CD8-positive, alpha-beta T cell (primary cell): ENCODE measurements at regions of chr4 and their contacts with region 1.

Region 1: DNA sequence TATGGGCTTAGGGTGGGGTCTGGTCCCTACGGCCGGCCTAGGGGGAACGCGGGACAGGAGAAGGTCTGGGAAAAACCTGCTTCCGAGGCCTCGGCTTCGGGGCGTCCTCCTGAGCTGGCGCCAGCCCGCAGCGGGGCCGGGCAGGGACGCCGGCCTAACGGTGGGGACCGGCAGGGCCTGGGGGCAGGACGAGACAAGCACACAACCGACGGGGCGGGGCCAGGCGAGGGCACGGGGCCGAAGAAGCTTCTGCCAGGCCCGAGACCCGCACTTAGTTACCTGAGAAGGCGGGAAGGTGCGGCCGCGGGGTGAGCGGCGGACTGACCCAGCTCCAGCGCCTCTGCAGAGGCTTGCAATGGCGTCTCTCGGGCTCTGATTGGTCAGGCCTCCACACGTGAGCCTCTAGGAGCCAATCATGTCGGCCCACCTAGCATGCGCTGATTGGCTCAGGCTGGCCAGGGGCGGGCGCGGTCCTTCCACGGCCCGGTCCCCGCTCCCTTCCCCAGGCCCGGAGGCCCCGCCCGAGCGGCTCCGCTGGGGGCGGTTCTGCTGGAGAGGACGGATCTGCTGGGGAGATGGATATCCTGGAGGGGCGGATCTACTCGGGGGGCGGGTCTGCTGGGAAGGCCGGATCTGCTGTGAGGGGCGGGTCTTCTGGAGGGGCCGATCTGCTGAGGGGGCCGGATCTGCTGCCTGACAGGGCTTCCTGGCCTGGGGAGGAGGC is 44.3 kb downstream of the CPLX1 start:
- DNase-seq: peak; percentile 97 to 99 (median 98)
- ATAC-seq: peak; percentile 92
- H3K4me3 ChIP-seq: peak overlapping the region; percentile 76 to 97
- H3K4me3 Mint-ChIP-seq: peak overlapping the region; percentile 92
- H3K27ac ChIP-seq: peak overlapping the region; percentile 94 to 95
- H3K27ac Mint-ChIP-seq: peak overlapping the region; percentile 95
- H3K4me1 ChIP-seq: peaks cover 46% of the 10 kb centered on the region
- H3K4me1 Mint-ChIP-seq: peaks cover 52% of the 10 kb centered on the region
- H3K27me3 ChIP-seq: peaks cover 0 to 17% of the 10 kb centered on the region in 2 experiments
- H3K27me3 Mint-ChIP-seq: peaks cover 21% of the 10 kb centered on the region
- CTCF ChIP-seq: no peak

Region 2: DNA sequence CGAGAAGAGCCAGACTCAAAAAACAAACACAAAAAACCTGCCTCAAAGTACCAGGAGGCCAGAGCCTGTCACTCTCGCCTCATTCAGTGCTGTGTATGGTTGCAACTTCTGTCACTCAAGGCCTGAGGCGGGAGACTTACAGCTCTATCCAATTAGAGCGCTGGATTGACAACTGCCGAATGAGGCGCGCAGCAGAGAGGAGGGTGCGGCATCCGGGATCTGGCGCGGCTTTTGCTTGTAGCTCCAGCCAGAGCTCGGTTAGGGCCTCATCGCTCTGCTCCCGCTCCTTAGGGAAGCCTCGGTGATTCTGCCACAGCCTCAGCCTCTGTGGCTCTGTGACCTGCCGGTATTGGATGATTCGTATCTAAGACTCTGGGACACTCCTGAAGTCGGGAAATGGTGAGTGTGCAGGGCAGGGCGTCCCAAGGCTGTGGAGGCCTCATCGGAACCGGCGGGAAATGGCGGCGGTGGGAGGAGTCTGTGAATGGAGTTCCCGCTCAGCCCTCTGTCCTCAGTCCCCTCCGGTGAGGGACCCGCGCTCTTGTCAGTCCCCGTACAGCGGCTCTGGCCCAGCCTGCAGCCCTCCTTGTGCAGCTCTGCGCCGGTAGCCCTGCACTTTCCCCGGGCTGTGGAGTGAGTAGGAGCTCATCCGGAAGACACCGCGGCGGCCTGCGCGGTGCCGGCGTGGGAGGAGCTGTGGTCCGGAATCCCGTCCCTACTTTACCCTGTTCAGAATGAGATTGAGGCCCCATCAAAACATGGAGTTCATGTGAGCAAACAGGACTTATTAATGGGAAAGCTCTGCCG is 657.2 kb before region 1 on chr4 and contains the start of gene ZNF718:
- CTCF ChIA-PET with region 1: no interaction called
- POLR2A ChIA-PET with region 1: no interaction called
- intact Hi-C with region 1: loop called in 1 of 2 experiments (anchors 5 kb)
- DNase-seq: peak; percentile 78 to 97 (median 91)
- ATAC-seq: peak; percentile 95
- H3K4me3 ChIP-seq: peak within 1 kb of the TSS; percentile 78 to 96
- H3K4me3 Mint-ChIP-seq: peak within 1 kb of the TSS; percentile 99
- H3K27ac ChIP-seq: peak within 1 kb of the TSS; percentile 75 to 83
- H3K27ac Mint-ChIP-seq: peak within 1 kb of the TSS; percentile 99
- H3K4me1 ChIP-seq: peaks cover 29% of the 10 kb centered on the region
- H3K4me1 Mint-ChIP-seq: peaks cover 44% of the 10 kb centered on the region
- H3K27me3 ChIP-seq: no peaks in the 10 kb centered on the region
- H3K27me3 Mint-ChIP-seq: no peaks in the 10 kb centered on the region
- CTCF ChIP-seq: no peak
- total RNA-seq, gene ZNF718: 3.6 to 4.0 TPM

Region 3: GRCh38 chr4:680928-681645 is 100.6 kb before region 1 on chr4:
- CTCF ChIA-PET with region 1: no interaction called
- POLR2A ChIA-PET with region 1: no interaction called
- intact Hi-C with region 1: loop called in 1 of 2 experiments (anchors 1 kb)
- DNase-seq: peak in 7 of 9 experiments; percentile 41 to 76 (median 55)
- ATAC-seq: peak; percentile 48
- H3K4me3 ChIP-seq: peak overlapping the region; percentile 54 to 56
- H3K4me3 Mint-ChIP-seq: peak overlapping the region; percentile 63
- H3K27ac ChIP-seq: peak overlapping the region in 1 of 2 experiments; percentile 69
- H3K27ac Mint-ChIP-seq: peak overlapping the region; percentile 27
- H3K4me1 ChIP-seq: peaks cover 9% of the 10 kb centered on the region
- H3K4me1 Mint-ChIP-seq: peaks cover 13% of the 10 kb centered on the region
- H3K27me3 ChIP-seq: no peaks in the 10 kb centered on the region
- H3K27me3 Mint-ChIP-seq: peaks cover 8% of the 10 kb centered on the region
- CTCF ChIP-seq: no peak

Region 4: DNA sequence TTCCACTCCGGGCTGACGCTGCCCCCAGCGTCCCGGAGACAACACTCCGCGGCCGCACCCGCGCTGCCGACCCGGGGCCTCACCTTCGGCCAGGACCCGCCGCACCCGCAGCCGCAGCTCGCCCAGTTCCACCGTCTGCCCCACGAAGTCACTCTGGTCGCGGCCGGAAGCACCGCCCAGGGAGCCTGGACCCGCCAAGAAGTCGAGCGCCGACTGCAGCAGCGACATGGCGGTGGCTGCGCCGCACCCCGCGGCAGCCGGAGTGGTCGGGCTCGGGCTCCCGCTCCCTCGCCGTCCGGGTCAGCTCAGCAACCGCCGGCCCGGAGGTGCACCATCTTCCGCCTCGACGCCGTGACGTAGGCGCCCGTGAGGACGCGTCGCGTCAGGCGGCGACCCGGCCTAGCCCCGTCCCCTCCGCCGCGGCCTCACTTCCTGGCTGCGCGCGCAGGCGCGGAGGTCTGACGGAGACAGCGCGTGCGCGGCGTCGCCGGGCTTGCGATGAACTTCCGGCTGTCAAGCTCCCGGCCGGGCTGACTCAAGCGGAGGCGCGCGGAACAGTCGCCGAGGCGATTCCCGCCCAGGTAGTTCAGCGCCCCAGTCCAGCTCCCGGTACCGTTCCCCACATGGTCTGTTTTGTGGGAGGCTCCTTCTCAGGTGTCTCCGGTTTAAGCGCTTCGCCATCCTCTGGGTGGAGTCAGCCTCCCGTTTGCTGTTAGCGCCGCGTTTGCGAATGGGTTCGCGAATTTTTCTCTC is 150.5 kb after region 1 on chr4 and contains the starts of genes GAK and TMEM175:
- CTCF ChIA-PET with region 1: no interaction called
- POLR2A ChIA-PET with region 1: interaction called, 8 read pairs
- intact Hi-C with region 1: loop called in 1 of 2 experiments (anchors 2 kb)
- DNase-seq: peak; percentile 90 to 99 (median 96)
- ATAC-seq: peak; percentile 91
- H3K4me3 ChIP-seq: peak within 1 kb of the TSS; percentile 91 to 96
- H3K4me3 Mint-ChIP-seq: peak within 1 kb of the TSS; percentile 96
- H3K27ac ChIP-seq: peak within 1 kb of the TSS; percentile 91 to 92
- H3K27ac Mint-ChIP-seq: peak within 1 kb of the TSS; percentile 97
- H3K4me1 ChIP-seq: peaks cover 39% of the 10 kb centered on the region
- H3K4me1 Mint-ChIP-seq: peaks cover 51% of the 10 kb centered on the region
- H3K27me3 ChIP-seq: no peaks in the 10 kb centered on the region
- H3K27me3 Mint-ChIP-seq: no peaks in the 10 kb centered on the region
- CTCF ChIP-seq: no peak
- total RNA-seq, gene GAK: 161 to 162 TPM
- total RNA-seq, gene TMEM175: 44.9 to 47.2 TPM

Region 5: GRCh38 chr4:1011022-1011694 is 229.5 kb after region 1 on chr4 and contains the start of gene FGFRL1:
- CTCF ChIA-PET with region 1: no interaction called
- POLR2A ChIA-PET with region 1: no interaction called
- intact Hi-C with region 1: loop called (anchors 1 kb)
- DNase-seq: peak; percentile 83 to 94 (median 93)
- ATAC-seq: peak; percentile 55
- H3K4me3 ChIP-seq: peak within 1 kb of the TSS; percentile 65 to 86
- H3K4me3 Mint-ChIP-seq: peak within 1 kb of the TSS; percentile 89
- H3K27ac ChIP-seq: peak within 1 kb of the TSS; percentile 65 to 71
- H3K27ac Mint-ChIP-seq: peak within 1 kb of the TSS; percentile 96
- H3K4me1 ChIP-seq: peaks cover 26% of the 10 kb centered on the region
- H3K4me1 Mint-ChIP-seq: peaks cover 12% of the 10 kb centered on the region
- H3K27me3 ChIP-seq: peaks cover 0 to 9% of the 10 kb centered on the region in 2 experiments
- H3K27me3 Mint-ChIP-seq: peaks cover 25% of the 10 kb centered on the region
- CTCF ChIP-seq: no peak
- total RNA-seq, gene FGFRL1: 26.3 to 30.2 TPM

Region 6: DNA sequence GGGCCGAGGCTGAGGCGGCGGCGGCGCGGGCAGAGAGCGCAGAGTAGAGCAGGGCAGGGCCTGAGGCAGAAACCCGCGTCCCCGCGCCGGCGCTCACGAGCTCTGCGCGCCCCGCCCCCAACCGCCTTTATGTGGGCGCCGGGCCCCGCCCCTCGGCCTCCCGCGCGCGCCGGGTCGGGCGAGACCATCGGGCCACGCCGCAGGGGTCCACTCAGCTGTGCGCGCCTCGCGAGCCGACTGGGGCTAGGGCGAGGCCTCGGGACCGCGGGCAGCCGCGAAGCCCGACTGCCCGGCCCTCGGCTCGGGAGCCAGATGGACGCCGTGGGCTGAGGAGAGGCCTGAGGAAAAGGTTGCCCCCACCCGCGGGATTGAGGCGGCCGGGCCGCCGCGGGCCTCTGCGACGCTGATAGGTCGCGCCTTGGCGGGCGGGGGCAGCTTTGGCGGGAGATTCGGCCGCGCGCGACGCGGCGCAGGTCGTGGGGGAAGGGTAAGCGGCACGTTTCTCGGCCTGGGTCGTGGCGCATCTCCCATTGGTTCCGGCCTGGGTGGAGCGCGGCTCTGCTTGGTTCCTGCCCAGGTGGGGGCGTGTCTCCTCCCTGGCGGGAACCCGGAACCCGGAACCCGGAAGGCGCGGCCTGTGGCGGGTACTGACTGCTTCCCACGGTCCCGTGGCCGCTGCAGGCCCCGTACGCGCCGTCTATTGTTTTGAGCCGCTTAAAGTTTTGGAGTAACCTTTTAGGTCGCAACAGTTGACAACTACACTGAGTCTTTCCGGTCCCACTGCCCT is 930.8 kb after region 1 on chr4 and contains the start of gene SLBP:
- CTCF ChIA-PET with region 1: no interaction called
- POLR2A ChIA-PET with region 1: no interaction called
- intact Hi-C with region 1: loop called in 1 of 2 experiments (anchors 5 kb)
- DNase-seq: peak; percentile 96 to 99 (median 99)
- ATAC-seq: peak; percentile 87
- H3K4me3 ChIP-seq: peak within 1 kb of the TSS; percentile 82 to 95
- H3K4me3 Mint-ChIP-seq: peak within 1 kb of the TSS; percentile 94
- H3K27ac ChIP-seq: peak within 1 kb of the TSS; percentile 95 to 97
- H3K27ac Mint-ChIP-seq: peak within 1 kb of the TSS; percentile 94
- H3K4me1 ChIP-seq: peaks cover 42% of the 10 kb centered on the region
- H3K4me1 Mint-ChIP-seq: peaks cover 60% of the 10 kb centered on the region
- H3K27me3 ChIP-seq: no peaks in the 10 kb centered on the region
- H3K27me3 Mint-ChIP-seq: no peaks in the 10 kb centered on the region
- CTCF ChIP-seq: no peak
- total RNA-seq, gene SLBP: 61.2 to 62.6 TPM